CD4-positive, alpha-beta T cell (primary cell): ENCODE measurements at regions of chr11 and their contacts with region 1.

Region 1: GRCh38 chr11:98260983-98261382 is 759.8 kb upstream of the CNTN5 start:
- DNase-seq: no peak
- ATAC-seq: no peak
- H3K4me3 ChIP-seq: no peak overlapping the region
- H3K4me3 Mint-ChIP-seq: no peak overlapping the region
- H3K27ac ChIP-seq: no peak overlapping the region
- H3K27ac Mint-ChIP-seq: no peak overlapping the region
- H3K4me1 ChIP-seq: no peaks in the 10 kb centered on the region
- H3K4me1 Mint-ChIP-seq: no peaks in the 10 kb centered on the region
- H3K27me3 ChIP-seq: no peaks in the 10 kb centered on the region
- H3K27me3 Mint-ChIP-seq: no peaks in the 10 kb centered on the region
- CTCF ChIP-seq: no peak

Region 2: DNA sequence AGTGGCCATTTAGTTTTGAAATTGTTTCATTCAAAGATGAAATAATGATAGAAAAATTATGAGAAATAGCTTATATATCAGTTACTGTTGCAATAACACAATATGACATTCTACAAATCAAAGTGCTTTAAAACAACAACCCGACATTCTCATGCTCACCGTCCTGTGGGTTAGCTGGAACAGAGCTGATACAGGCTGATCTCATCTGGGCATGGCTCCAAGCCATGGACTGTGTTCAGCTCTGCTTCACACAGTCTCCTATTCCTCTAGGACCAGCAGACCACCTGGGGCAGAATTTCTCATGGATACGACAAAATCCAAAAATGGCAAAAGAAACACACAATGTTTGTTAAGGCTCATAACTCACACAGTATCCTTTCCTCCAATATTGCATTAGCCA is 938.4 kb after region 1 on chr11:
- CTCF ChIA-PET with region 1: no interaction called
- POLR2A ChIA-PET with region 1: no interaction called
- intact Hi-C with region 1: loop called in 1 of 2 experiments (anchors 10 kb)
- DNase-seq: no peak
- ATAC-seq: no peak
- H3K4me3 ChIP-seq: no peak overlapping the region
- H3K4me3 Mint-ChIP-seq: no peak overlapping the region
- H3K27ac ChIP-seq: no peak overlapping the region
- H3K27ac Mint-ChIP-seq: no peak overlapping the region
- H3K4me1 ChIP-seq: no peaks in the 10 kb centered on the region
- H3K4me1 Mint-ChIP-seq: no peaks in the 10 kb centered on the region
- H3K27me3 ChIP-seq: no peaks in the 10 kb centered on the region
- H3K27me3 Mint-ChIP-seq: no peaks in the 10 kb centered on the region
- CTCF ChIP-seq: no peak